ENCODE measurements at regions of chr2 and their contacts with region 1.

Region 1: DNA sequence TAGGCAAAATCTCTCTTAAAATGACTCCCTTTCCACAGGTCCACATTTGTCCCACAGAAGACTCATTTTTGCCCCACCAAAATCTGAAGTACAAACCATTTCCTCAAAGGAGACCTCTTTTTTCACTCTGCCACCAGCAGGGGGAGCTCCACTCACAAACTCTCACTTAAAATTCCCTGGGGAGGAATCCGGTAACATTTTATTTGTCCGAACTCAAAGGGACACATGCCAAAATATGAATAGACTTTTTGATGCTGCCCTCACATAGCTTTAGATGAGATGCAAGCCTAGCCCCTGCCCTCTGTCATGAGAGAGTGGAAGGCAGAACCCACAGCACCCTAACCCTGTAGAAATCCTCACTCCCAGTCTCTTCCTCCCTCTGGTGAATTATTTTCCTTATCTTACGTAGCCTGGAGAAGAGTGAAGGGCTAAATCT is 57.1 kb downstream of the RMDN2 start:
- DNase-seq: peak; percentile 30
- ATAC-seq: peak; percentile 61
- H3K4me3 ChIP-seq: no peak overlapping the region
- H3K27ac ChIP-seq: no peak overlapping the region
- H3K4me1 ChIP-seq: no peaks in the 10 kb centered on the region
- H3K27me3 ChIP-seq: no peaks in the 10 kb centered on the region
- CTCF ChIP-seq: peak; percentile 61 to 76 (median 70)
- EP300 ChIP-seq: no peak
- POLR2A ChIP-seq: no peak
- RAD21 ChIP-seq: peak; percentile 64

Region 2: DNA sequence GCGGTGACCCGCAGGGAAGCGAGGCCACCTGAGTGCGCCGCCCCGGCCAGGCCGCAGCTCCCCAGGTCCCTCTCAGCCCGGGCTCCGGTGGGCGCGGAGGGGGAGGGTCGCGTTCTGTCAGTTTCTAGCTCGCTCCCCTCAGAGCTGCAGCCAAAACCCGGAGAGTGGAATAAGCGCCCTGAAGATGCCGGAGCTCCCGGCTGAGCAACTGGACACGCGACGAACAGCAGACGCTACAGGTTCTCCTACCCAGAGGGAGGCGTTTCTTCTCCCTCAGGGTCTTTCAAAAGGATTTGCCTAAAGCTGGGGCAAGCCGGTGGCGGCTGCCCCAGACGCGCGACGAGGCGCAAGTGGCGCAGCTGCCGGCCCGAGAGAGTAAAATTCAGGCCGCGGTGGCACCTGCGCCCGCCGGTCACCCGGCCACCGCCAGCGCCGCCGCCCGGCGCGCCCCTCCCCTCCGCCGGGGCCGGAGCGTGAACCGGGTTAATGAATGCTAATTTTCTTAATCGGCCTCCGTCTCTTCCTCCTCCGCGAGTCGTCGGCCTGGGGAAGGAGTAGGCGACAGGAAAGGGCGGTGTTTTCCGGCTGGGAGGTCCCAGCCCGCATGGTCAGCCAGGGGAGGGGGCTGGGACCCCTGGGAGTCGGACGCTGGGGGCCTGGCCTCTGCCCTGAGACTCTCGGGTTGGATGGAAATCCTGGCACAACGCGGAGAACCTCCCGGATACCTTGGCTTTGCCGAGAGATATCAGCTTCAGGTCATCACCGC is 309.9 kb before region 1 on chr2:
- CTCF ChIA-PET with region 1: no interaction called
- POLR2A ChIA-PET with region 1: no interaction called
- RAD21 ChIA-PET with region 1: no interaction called
- SMC1A ChIA-PET with region 1: no interaction called
- in situ Hi-C with region 1: no loop called
- intact Hi-C with region 1: no loop called
- DNase-seq: no peak
- ATAC-seq: peak; percentile 58
- H3K4me3 ChIP-seq: peak overlapping the region; percentile 87
- H3K27ac ChIP-seq: peak overlapping the region; percentile 77
- H3K4me1 ChIP-seq: no peaks in the 10 kb centered on the region; the same call in 1 of the 2 replicates
- H3K27me3 ChIP-seq: no peaks in the 10 kb centered on the region
- CTCF ChIP-seq: no peak
- EP300 ChIP-seq: no peak
- POLR2A ChIP-seq: peak; percentile 51; the same call in 1 of the 2 replicates
- RAD21 ChIP-seq: no peak

Region 3: DNA sequence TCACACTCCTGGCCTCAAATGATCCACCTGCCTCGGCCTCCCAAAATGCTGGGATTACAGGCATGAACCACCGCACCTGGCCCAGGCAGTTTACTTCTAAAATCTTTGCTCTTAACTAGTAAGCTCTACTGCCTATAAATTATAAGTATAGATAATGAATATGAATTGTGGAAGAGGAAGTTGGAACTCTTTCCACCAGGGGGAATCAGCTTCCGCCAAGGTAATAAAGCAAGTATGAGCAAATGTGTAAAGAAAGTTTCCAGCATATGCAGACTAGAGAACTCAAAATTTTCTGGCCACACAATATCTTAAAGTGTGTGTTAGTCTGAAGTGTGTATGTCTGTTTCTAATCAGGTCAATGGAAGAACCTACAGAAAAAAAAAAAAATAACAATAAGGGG is 11.0 kb after region 1 on chr2:
- CTCF ChIA-PET with region 1: interaction called, 10 read pairs
- POLR2A ChIA-PET with region 1: no interaction called
- RAD21 ChIA-PET with region 1: no interaction called
- SMC1A ChIA-PET with region 1: interaction called, 4 read pairs
- in situ Hi-C with region 1: no loop called
- intact Hi-C with region 1: no loop called
- DNase-seq: no peak
- ATAC-seq: no peak
- H3K4me3 ChIP-seq: no peak overlapping the region
- H3K27ac ChIP-seq: no peak overlapping the region
- H3K4me1 ChIP-seq: no peaks in the 10 kb centered on the region
- H3K27me3 ChIP-seq: no peaks in the 10 kb centered on the region
- CTCF ChIP-seq: no peak
- EP300 ChIP-seq: no peak
- POLR2A ChIP-seq: no peak
- RAD21 ChIP-seq: no peak

Region 4: GRCh38 chr2:38056216-38056615 is 74.1 kb after region 1 on chr2:
- CTCF ChIA-PET with region 1: no interaction called
- POLR2A ChIA-PET with region 1: no interaction called
- RAD21 ChIA-PET with region 1: no interaction called
- SMC1A ChIA-PET with region 1: no interaction called
- in situ Hi-C with region 1: no loop called
- intact Hi-C with region 1: no loop called
- DNase-seq: no peak
- ATAC-seq: no peak
- H3K4me3 ChIP-seq: no peak overlapping the region
- H3K27ac ChIP-seq: no peak overlapping the region
- H3K4me1 ChIP-seq: no peaks in the 10 kb centered on the region
- H3K27me3 ChIP-seq: no peaks in the 10 kb centered on the region
- CTCF ChIP-seq: no peak
- EP300 ChIP-seq: no peak
- POLR2A ChIP-seq: no peak
- RAD21 ChIP-seq: no peak

Measured in GM12878 (cell line).